Activated CD4-positive, alpha-beta memory T cell treated with anti-CD3 and anti-CD28 coated beads for 36 hours (primary cell): ENCODE measurements at regions of chr6 and their contacts with region 1.

Region 1: GRCh38 chr6:35737413-35738211 is 780 bp downstream of the ARMC12 start:
- DNase-seq: no peak
- H3K4me3 Mint-ChIP-seq: no peak overlapping the region
- H3K27ac Mint-ChIP-seq: peak overlapping the region; percentile 33
- H3K4me1 Mint-ChIP-seq: peaks cover 37% of the 10 kb centered on the region
- H3K27me3 Mint-ChIP-seq: no peaks in the 10 kb centered on the region

Region 2: DNA sequence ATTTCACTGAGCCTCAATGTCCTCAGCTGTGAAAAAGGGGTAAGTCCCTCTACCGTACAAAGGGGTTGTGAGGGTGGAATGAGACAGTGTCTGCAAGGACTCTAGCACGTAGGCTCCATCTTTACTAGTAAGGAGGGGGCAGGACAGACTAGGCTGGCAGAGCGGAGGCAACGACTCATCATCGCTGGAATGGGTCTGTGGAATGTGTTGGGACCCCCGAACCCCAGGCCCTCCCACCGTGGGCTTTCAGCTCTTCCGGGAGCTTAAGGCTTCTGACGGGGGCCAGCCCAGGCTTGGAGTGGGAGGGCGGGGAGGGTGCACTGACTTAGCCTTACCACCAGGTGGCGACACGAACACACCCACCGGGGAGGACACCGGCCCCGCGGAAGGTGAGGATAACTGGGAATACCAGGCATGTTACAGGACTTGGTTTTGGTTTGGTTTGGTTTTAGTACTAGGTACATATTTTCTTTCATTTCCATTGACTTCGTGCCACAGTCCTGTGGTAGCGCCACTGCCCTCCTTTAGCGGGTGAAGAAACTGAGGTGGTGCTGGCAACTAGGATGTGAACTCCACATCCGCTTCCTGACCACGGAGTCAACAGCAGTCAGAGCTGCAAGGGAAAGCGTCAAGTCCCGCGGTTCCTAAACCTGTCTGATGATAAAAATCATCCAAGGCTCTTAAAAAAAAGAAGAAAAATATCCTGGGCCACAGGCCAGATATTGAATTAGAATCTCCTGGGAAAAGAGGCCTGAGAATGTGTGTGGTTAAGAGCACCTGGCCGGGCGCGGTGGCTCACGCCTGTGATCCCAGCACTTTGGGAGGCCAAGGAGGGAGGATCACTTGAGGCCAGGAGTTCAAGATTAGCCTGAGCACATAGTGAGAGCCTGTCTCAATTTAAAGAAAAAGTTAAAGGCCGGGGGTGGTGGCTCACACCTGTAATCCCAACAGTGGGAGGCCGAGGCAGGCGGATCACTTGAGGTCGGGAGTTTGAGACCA is 214.7 kb before region 1 on chr6:
- CTCF ChIA-PET with region 1: interaction called, 125 read pairs
- POLR2A ChIA-PET with region 1: no interaction called
- intact Hi-C with region 1: loop called (anchors 1 kb)
- DNase-seq: peak; percentile 87
- H3K4me3 Mint-ChIP-seq: peak overlapping the region; percentile 67
- H3K27ac Mint-ChIP-seq: no peak overlapping the region
- H3K4me1 Mint-ChIP-seq: peaks cover 8% of the 10 kb centered on the region
- H3K27me3 Mint-ChIP-seq: no peaks in the 10 kb centered on the region

Region 3: DNA sequence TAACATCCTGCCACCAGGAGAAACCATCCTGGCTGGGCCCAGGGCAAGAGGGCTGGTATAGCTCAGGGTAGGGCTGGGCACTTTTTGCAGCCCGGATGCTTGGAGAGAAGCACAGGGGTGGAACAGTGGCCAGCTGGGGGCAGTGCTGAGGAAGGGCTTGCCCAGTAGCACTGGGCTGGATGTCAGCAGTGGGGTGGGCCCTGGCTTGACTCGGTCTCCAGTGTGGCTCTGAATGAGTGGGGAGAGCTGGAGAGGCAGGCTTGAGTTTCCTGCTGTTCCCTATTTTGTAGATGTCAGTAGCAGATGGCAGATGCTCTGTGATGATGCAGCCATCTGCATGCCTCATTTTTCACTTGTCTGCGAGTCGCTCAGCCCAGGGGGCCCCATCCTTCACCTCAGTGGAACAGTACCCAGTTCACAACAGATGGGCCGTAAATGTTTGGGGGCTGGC is 168.6 kb before region 1 on chr6:
- CTCF ChIA-PET with region 1: interaction called, 62 read pairs
- POLR2A ChIA-PET with region 1: no interaction called
- intact Hi-C with region 1: loop called (anchors 1 kb)
- DNase-seq: peak; percentile 68
- H3K4me3 Mint-ChIP-seq: no peak overlapping the region
- H3K27ac Mint-ChIP-seq: no peak overlapping the region
- H3K4me1 Mint-ChIP-seq: peaks cover 2% of the 10 kb centered on the region
- H3K27me3 Mint-ChIP-seq: peaks cover 3% of the 10 kb centered on the region

Region 4: GRCh38 chr6:35776364-35777215 is 39.0 kb after region 1 on chr6 and contains the start of gene CLPSL2:
- CTCF ChIA-PET with region 1: no interaction called
- POLR2A ChIA-PET with region 1: no interaction called
- intact Hi-C with region 1: no loop called
- DNase-seq: no peak
- H3K4me3 Mint-ChIP-seq: peak within 1 kb of the TSS; percentile 35
- H3K27ac Mint-ChIP-seq: no peak within 1 kb of the TSS
- H3K4me1 Mint-ChIP-seq: peaks cover 5% of the 10 kb centered on the region
- H3K27me3 Mint-ChIP-seq: peaks cover 25% of the 10 kb centered on the region
- total RNA-seq, gene CLPSL2: not detected